CD4-positive, alpha-beta T cell (primary cell): ENCODE measurements at regions of chr5 and their contacts with region 1.

Region 1: GRCh38 chr5:113474100-113474728 is 14.0 kb downstream of the MCC start:
- DNase-seq: no peak
- ATAC-seq: no peak
- H3K4me3 ChIP-seq: no peak overlapping the region
- H3K4me3 Mint-ChIP-seq: no peak overlapping the region
- H3K27ac ChIP-seq: no peak overlapping the region
- H3K27ac Mint-ChIP-seq: no peak overlapping the region
- H3K4me1 ChIP-seq: no peaks in the 10 kb centered on the region
- H3K4me1 Mint-ChIP-seq: no peaks in the 10 kb centered on the region
- H3K27me3 ChIP-seq: peaks cover 11 to 18% of the 10 kb centered on the region in 2 experiments
- H3K27me3 Mint-ChIP-seq: peaks cover 43% of the 10 kb centered on the region
- CTCF ChIP-seq: no peak

Region 2: DNA sequence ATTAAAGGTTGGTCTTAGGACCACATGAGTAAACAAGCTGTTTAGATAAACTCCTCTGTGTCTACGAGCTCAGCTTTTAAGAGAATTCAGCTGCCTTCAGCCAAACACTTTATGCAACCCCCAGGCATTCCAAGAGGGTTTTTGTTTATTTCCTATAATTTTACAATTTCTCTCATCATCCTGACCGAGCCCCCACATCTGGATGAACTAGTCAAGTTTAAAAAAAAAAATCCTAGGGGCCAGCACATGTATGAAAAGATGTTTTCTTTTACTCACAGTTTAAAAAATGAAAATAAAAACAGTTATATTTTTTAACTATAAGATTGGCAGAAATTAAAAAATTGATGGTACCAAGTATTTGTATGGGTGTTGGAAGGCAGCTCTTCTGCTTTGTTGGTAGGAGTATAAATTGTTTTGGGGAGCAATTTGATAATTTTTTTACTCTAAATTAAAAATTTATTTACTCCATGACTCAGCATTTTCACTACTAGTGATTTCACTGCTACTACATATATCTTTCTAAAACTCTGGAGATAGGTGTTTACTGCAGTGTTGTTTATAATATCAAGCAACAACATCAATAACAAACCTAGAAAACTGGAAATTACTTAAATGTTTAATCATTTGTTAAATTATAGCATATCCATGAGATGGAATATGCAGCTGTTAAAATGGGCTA is 57.4 kb after region 1 on chr5:
- CTCF ChIA-PET with region 1: no interaction called
- POLR2A ChIA-PET with region 1: no interaction called
- intact Hi-C with region 1: loop called in 1 of 2 experiments (anchors 2 kb)
- DNase-seq: no peak
- ATAC-seq: no peak
- H3K4me3 ChIP-seq: no peak overlapping the region
- H3K4me3 Mint-ChIP-seq: no peak overlapping the region
- H3K27ac ChIP-seq: no peak overlapping the region
- H3K27ac Mint-ChIP-seq: no peak overlapping the region
- H3K4me1 ChIP-seq: no peaks in the 10 kb centered on the region
- H3K4me1 Mint-ChIP-seq: peaks cover 10% of the 10 kb centered on the region
- H3K27me3 ChIP-seq: no peaks in the 10 kb centered on the region
- H3K27me3 Mint-ChIP-seq: no peaks in the 10 kb centered on the region
- CTCF ChIP-seq: no peak